Activated T-helper 1 cell treated with anti-CD3 and anti-CD28 coated beads, Interleukin-12 subunit alpha, Interleukin-12 subunit beta, Interleukin-2, Interleukin-4 antibody, amounts not matched to agents 30 ng/mL and 10 ng/mL and 1 ng/mL, durations not matched to agents 14 hours and 24 hours and 36 hours (primary cell): ENCODE measurements at regions of chr11 and their contacts with region 1.

Region 1: GRCh38 chr11:17354601-17354991 is 3.0 kb downstream of the NCR3LG1 start:
- DNase-seq: peak; percentile 56
- H3K4me3 Mint-ChIP-seq: peak overlapping the region; percentile 73
- H3K27ac Mint-ChIP-seq: peak overlapping the region; percentile 73
- H3K4me1 Mint-ChIP-seq: peaks cover 40% of the 10 kb centered on the region
- H3K27me3 Mint-ChIP-seq: peaks cover 43% of the 10 kb centered on the region

Region 2: GRCh38 chr11:16902781-16903378 is 451.7 kb before region 1 on chr11:
- intact Hi-C with region 1: loop called (anchors 5 kb)
- DNase-seq: no peak
- H3K4me3 Mint-ChIP-seq: peak overlapping the region; percentile 28
- H3K27ac Mint-ChIP-seq: peak overlapping the region; percentile 86
- H3K4me1 Mint-ChIP-seq: peaks cover 52% of the 10 kb centered on the region
- H3K27me3 Mint-ChIP-seq: no peaks in the 10 kb centered on the region

Region 3: DNA sequence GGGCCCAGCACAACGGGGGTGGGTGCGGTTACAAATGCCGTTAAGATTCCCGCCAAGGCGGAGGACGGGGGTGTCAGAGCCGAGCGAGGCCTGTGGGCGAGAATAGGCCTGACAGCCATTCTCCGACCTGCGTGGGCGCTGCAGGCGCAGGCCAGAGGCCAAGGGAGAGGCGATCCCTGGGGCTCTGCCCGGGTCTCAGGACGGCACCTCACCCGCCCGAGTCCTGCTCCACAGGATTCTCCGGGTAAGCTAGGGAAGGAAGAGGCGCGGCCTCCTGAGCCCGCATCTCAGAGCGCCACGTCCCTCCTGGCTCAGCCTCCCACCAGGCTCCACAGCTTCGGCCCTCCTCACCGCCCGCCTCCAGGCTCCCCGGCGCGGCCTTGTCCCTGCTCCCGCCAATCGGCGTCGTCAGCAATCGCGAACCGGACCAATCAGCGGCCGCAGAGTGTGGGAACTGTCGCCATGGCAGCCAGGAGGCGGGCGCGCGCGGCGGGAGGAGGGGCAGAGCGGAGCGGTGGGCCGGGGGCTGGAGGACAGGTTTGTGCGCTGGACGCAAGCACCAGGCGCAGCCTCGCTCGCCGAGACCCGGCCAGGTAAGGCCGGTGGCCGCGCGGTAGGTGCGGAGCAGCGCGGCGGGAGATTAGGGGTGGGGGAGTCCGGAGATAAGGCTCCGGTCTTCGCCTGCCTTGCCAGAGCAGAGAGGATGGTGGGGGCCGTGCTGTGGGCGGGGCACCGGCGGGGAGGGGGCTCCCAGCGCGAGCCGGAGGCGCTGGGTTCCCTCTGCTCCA is 78.2 kb before region 1 on chr11 and contains the start of gene NUCB2:
- intact Hi-C with region 1: loop called (anchors 1 kb)
- DNase-seq: peak; percentile 95
- H3K4me3 Mint-ChIP-seq: peak within 1 kb of the TSS; percentile 87
- H3K27ac Mint-ChIP-seq: peak within 1 kb of the TSS; percentile 77
- H3K4me1 Mint-ChIP-seq: peaks cover 48% of the 10 kb centered on the region
- H3K27me3 Mint-ChIP-seq: peaks cover 3% of the 10 kb centered on the region
- total RNA-seq, gene NUCB2: 51.1 and 61.7 TPM in 2 replicates

Region 4: GRCh38 chr11:17343907-17344306 is 10.7 kb before region 1 on chr11:
- intact Hi-C with region 1: loop called (anchors 1 kb)
- DNase-seq: no peak
- H3K4me3 Mint-ChIP-seq: no peak overlapping the region
- H3K27ac Mint-ChIP-seq: no peak overlapping the region
- H3K4me1 Mint-ChIP-seq: peaks cover 16% of the 10 kb centered on the region
- H3K27me3 Mint-ChIP-seq: no peaks in the 10 kb centered on the region

Region 5: DNA sequence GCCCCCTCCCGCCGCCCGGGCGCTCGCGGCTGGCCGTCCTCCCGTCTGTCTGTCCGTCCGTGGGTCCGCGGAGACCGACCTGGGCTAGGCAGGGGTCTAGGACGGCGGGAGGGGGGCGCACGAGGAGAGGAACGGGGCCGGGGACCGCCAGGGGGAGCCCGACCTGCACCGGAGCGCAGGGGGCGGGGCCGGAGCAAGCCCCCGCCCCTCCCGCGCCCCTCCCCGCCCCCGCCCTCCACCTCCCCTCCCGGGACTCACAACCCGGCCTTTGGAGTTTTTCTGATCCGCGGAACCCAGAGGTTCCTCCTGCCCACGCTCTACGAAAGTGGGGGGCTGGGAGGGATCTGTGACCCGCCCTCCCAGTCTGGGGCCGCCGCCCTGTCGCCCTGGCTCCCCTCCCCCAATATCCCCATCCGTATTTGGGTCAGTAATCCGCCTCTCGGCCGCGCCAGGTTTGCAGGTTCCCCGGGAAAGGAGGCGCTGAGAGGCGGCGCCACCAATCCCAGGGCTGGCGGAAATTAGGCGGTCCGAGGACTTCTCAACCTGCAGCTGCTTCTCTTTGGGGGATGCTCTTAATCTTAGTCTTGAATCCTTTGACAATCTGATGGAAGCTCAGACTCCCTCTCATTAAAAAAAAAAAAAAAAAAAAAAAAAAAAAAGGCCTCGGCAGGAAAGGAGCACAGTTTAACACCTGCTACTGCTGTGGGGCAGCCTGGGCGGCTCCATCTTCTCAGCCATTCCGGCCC is 34.8 kb after region 1 on chr11:
- intact Hi-C with region 1: loop called (anchors 1 kb)
- DNase-seq: peak; percentile 65
- H3K4me3 Mint-ChIP-seq: peak overlapping the region; percentile 78
- H3K27ac Mint-ChIP-seq: peak overlapping the region; percentile 71
- H3K4me1 Mint-ChIP-seq: no peaks in the 10 kb centered on the region
- H3K27me3 Mint-ChIP-seq: peaks cover 26% of the 10 kb centered on the region

Region 6: GRCh38 chr11:17561526-17561925 is 206.9 kb after region 1 on chr11:
- intact Hi-C with region 1: no loop called
- DNase-seq: no peak
- H3K4me3 Mint-ChIP-seq: no peak overlapping the region
- H3K27ac Mint-ChIP-seq: no peak overlapping the region
- H3K4me1 Mint-ChIP-seq: no peaks in the 10 kb centered on the region
- H3K27me3 Mint-ChIP-seq: no peaks in the 10 kb centered on the region

Region 7: GRCh38 chr11:17572359-17572690 is 217.7 kb after region 1 on chr11:
- intact Hi-C with region 1: no loop called
- DNase-seq: no peak
- H3K4me3 Mint-ChIP-seq: no peak overlapping the region
- H3K27ac Mint-ChIP-seq: no peak overlapping the region
- H3K4me1 Mint-ChIP-seq: no peaks in the 10 kb centered on the region
- H3K27me3 Mint-ChIP-seq: peaks cover 2% of the 10 kb centered on the region